ENCODE measurements at regions of chr1 and their contacts with region 1.

Region 1: DNA sequence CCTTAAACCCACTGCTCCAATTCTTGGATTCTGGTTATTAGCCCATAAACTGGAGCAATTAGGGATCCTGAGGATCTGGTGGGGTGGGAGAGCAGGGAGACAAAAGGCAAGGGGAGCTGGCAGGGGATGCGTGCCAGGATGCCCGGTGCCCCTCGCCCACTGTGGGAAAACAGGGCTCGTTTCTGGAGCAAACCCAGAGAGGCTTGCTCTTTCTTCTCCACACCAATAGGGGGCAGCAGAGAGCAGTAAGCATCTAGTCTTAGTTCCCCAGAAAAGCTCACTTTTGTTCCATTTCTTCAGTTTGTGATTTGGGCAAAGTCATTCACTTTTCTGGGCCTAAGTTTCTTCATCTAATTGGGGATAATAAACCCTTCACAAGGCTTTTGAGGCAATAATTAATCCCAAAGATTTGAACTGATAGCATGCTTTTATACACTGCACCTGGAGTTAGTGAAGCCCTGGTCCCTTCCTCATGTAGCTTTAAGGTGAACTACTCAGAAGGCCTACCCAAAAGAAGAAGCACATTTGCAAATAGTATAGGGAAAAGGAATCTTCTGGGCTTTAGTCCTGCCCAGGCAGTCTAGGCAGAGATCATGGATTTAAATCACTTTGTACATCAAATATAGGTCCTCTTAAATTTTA is 160.6 kb upstream of the USP24 start:
- DNase-seq: peak; percentile 47
- ATAC-seq: peak; percentile 68; the same call in 1 of the 2 replicates
- H3K4me3 ChIP-seq: no peak overlapping the region
- H3K27ac ChIP-seq: 0 out of 2 replicates have a peak overlapping the region, but pooled peaks have one; percentile 4
- H3K4me1 ChIP-seq: peaks cover 13% of the 10 kb centered on the region
- H3K27me3 ChIP-seq: no peaks in the 10 kb centered on the region
- CTCF ChIP-seq: peak; percentile 79
- POLR2A ChIP-seq: no peak
- RAD21 ChIP-seq: peak; percentile 76

Region 2: DNA sequence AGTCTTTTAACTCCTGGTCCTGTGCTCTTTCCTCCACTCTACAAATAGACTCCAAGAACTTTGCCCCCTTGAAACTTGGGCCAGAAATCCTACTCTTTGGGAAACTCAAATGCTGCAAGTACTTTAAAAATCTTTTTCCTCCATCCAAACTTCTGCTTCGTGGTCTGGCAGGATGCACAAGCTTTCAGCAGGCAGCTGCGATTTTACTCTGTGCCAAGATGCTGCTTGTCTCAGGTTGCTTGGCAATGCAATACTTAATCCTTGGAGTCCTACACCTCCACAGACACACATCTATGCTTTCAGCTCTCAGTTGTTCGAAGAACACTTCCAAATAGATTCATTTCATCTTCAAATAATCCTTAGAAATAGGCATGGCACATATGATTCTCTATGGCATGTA is 274.7 kb after region 1 on chr1:
- CTCF ChIA-PET with region 1: no interaction called
- POLR2A ChIA-PET with region 1: no interaction called
- dilution Hi-C with region 1: no loop called
- in situ Hi-C with region 1: no loop called
- intact Hi-C with region 1: no loop called
- DNase-seq: peak; percentile 27
- ATAC-seq: no peak; the same call in 1 of the 2 replicates
- H3K4me3 ChIP-seq: no peak overlapping the region
- H3K27ac ChIP-seq: no peak overlapping the region
- H3K4me1 ChIP-seq: no peaks in the 10 kb centered on the region
- H3K27me3 ChIP-seq: no peaks in the 10 kb centered on the region
- CTCF ChIP-seq: no peak
- POLR2A ChIP-seq: no peak
- RAD21 ChIP-seq: no peak

Region 3: DNA sequence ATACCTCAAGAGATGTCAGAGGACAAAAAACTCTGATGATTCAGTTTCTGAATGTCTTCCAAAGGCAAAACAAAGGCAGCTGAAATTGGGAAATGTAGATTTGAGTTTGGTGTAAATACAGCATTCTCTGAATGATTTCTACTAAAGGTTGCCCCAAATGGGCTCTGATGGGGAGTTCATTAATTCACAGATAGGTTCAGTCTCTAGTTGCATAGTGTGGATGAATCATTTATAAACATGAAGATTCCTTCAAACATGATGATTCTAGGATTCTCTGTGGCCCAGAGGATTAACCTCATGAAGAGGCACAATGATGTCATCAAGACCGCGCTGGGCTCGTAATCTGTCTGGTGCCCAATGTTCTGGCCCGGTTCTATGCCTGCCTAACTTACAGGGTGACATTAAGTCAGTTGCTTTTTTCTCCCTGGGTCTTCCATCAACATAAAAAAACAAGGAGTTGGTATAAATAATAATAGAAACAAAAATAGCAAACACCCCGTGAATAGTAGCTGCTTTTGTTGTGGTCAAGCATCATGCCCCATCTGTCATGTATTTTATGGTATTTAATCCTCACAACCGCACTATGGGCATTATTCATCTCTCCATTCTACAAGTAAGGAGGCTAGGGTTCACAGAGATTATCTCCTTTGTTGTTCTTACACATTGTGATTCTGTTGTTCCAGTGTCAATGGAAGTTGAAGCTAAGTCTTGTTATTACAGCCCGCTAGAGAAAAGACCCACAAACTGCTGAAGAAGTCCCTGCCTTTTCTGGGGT is 349.0 kb after region 1 on chr1:
- CTCF ChIA-PET with region 1: interaction called, 5 read pairs
- POLR2A ChIA-PET with region 1: no interaction called
- dilution Hi-C with region 1: no loop called
- in situ Hi-C with region 1: no loop called
- intact Hi-C with region 1: loop called (anchors 2 kb)
- DNase-seq: peak; percentile 97
- ATAC-seq: peak; percentile 87
- H3K4me3 ChIP-seq: no peak overlapping the region
- H3K27ac ChIP-seq: peak overlapping the region; percentile 84
- H3K4me1 ChIP-seq: peaks cover 17% of the 10 kb centered on the region
- H3K27me3 ChIP-seq: no peaks in the 10 kb centered on the region
- CTCF ChIP-seq: no peak
- POLR2A ChIP-seq: no peak
- RAD21 ChIP-seq: no peak; the same call in 1 of the 2 replicates

Region 4: GRCh38 chr1:55848906-55849305 is 473.2 kb after region 1 on chr1:
- CTCF ChIA-PET with region 1: no interaction called
- POLR2A ChIA-PET with region 1: no interaction called
- dilution Hi-C with region 1: no loop called
- in situ Hi-C with region 1: no loop called
- intact Hi-C with region 1: loop called (anchors 5 kb)
- DNase-seq: peak; percentile 73
- ATAC-seq: peak; percentile 66
- H3K4me3 ChIP-seq: no peak overlapping the region
- H3K27ac ChIP-seq: no peak overlapping the region
- H3K4me1 ChIP-seq: no peaks in the 10 kb centered on the region
- H3K27me3 ChIP-seq: no peaks in the 10 kb centered on the region
- CTCF ChIP-seq: peak; percentile 56
- POLR2A ChIP-seq: no peak
- RAD21 ChIP-seq: peak; percentile 75

Region 5: DNA sequence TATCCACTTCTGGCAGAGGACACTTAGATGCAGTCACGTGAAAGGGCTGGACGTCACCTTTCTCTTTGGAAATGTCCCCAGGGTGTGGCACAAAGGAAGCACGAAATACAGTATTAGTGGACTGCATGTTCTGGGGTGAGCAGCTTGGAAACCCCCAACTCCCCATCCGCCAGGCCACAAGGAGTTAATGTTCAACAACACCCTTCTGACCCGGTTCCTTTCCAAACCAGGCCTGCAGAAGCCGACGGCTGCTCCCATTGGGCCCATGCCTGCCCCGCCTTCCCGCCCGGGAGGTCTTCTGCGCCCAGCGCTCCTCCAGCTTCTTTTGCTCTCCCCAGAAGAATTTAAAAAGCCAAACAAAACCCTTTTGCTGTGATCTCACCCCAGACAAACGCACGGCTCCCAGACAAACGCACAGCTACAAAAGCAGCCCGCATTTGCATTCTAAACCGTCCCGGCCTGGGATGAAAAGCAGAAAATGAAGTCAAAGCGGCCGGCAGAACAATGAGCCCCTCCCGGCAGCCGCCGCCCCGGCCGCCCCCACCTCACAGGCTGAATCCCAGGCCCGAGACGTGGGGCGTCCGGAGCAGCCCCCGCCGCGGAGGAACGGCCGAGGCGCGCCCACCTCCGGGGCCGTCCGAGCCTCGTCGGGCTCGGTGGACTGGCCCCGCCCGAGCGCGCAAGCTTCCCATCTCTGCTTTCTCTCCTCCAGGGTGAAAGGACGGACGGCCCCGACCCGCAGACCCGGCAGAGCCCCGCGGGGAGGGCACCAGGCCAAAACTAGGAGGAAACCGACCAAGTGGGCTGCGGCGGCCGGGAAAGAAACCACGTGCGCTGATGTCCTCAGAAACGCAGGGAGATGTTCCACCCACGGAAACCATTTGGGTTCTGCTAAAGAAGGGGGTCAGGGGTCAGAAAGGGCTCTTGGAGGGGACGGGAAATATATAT is 1101.7 kb after region 1 on chr1:
- CTCF ChIA-PET with region 1: no interaction called
- POLR2A ChIA-PET with region 1: no interaction called
- dilution Hi-C with region 1: no loop called
- in situ Hi-C with region 1: no loop called
- intact Hi-C with region 1: loop called (anchors 10 kb)
- DNase-seq: peak; percentile 65
- ATAC-seq: peak; percentile 91
- H3K4me3 ChIP-seq: peak overlapping the region; percentile 45
- H3K27ac ChIP-seq: peak overlapping the region; percentile 80
- H3K4me1 ChIP-seq: peaks cover 4% of the 10 kb centered on the region; the same call in 1 of the 2 replicates
- H3K27me3 ChIP-seq: no peaks in the 10 kb centered on the region
- CTCF ChIP-seq: no peak
- POLR2A ChIP-seq: no peak
- RAD21 ChIP-seq: no peak